ENCODE measurements at regions of chr5 and their contacts with region 1.

Region 1: DNA sequence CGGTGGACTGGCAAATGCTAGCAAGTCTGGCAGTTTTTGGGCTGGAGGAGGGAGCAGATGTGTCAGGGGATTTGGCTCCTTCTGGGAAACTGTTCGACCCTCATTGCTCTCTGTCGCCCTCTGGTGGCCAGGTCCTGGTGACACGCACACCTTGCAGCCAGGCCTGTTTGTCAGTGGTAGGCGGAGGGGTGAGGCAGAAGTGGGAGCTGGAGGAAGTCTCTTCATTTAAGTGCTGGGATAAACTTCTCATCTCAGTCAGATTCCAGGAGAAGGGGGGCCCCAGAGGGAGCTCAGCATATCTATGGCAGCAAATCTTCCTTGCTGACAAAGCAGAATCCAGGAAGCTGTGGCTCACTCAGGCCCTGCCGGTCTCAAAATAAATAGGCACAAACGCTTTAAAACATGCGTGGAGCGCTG is 326.5 kb downstream of the ZSWIM6 start:
- DNase-seq: peak; percentile 38
- H3K4me3 ChIP-seq: no peak overlapping the region
- H3K27ac ChIP-seq: no peak overlapping the region
- H3K27me3 ChIP-seq: peaks cover 13% of the 10 kb centered on the region
- CTCF ChIP-seq: peak; percentile 94

Region 2: GRCh38 chr5:60960591-60960990 is 698.0 kb before region 1 on chr5:
- CTCF ChIA-PET with region 1: interaction called, 19 read pairs
- POLR2A ChIA-PET with region 1: no interaction called
- DNase-seq: no peak
- H3K4me3 ChIP-seq: no peak overlapping the region
- H3K27ac ChIP-seq: no peak overlapping the region
- H3K27me3 ChIP-seq: no peaks in the 10 kb centered on the region
- CTCF ChIP-seq: peak; percentile 71

Region 3: DNA sequence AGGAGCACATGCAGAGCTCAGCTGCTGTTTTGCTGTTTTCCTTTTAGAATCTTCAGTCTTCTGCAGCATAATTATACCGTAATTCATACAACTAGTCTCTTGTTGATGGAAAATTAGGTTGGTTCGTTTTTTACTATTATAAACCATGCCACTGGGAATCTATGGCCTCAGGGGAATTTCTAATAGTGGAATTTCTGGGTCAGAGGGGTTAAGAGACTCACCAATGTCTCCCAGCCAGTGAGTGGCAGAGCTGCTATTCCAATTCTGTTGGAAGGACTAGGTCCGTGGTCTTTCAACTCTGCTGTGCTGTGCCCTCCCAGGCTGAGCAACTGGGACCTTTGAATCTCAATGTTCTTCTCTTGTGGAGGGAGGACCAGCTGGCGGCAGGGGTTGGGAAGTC is 44.0 kb before region 1 on chr5:
- CTCF ChIA-PET with region 1: interaction called, 13 read pairs
- POLR2A ChIA-PET with region 1: no interaction called
- DNase-seq: no peak
- H3K4me3 ChIP-seq: no peak overlapping the region
- H3K27ac ChIP-seq: no peak overlapping the region
- H3K27me3 ChIP-seq: peaks cover 13% of the 10 kb centered on the region
- CTCF ChIP-seq: no peak

Region 4: GRCh38 chr5:61641747-61642578 is 16.6 kb before region 1 on chr5:
- CTCF ChIA-PET with region 1: interaction called, 17 read pairs
- POLR2A ChIA-PET with region 1: no interaction called
- DNase-seq: no peak
- H3K4me3 ChIP-seq: no peak overlapping the region
- H3K27ac ChIP-seq: no peak overlapping the region
- H3K27me3 ChIP-seq: peaks cover 20% of the 10 kb centered on the region
- CTCF ChIP-seq: peak; percentile 29; the same call in 1 of the 2 replicates

Region 5: GRCh38 chr5:61678966-61679365 is 20.4 kb after region 1 on chr5:
- CTCF ChIA-PET with region 1: interaction called, 13 read pairs
- POLR2A ChIA-PET with region 1: no interaction called
- DNase-seq: no peak
- H3K4me3 ChIP-seq: no peak overlapping the region
- H3K27ac ChIP-seq: no peak overlapping the region
- H3K27me3 ChIP-seq: peaks cover 21% of the 10 kb centered on the region
- CTCF ChIP-seq: no peak

Region 6: GRCh38 chr5:61724102-61724501 is 65.5 kb after region 1 on chr5:
- CTCF ChIA-PET with region 1: no interaction called
- POLR2A ChIA-PET with region 1: no interaction called
- DNase-seq: no peak
- H3K4me3 ChIP-seq: no peak overlapping the region
- H3K27ac ChIP-seq: no peak overlapping the region
- H3K27me3 ChIP-seq: no peaks in the 10 kb centered on the region
- CTCF ChIP-seq: no peak

Measured in AG04450 (cell line).